H1 (cell line): ENCODE measurements at regions of chr10 and their contacts with region 1.

Region 1: GRCh38 chr10:69515699-69516259 is 57.4 kb downstream of the NEUROG3 start:
- DNase-seq: peak; percentile 63 to 90
- H3K4me3 ChIP-seq: no peak overlapping the region
- H3K27ac ChIP-seq: no peak overlapping the region
- H3K4me1 ChIP-seq: peaks cover 0 to 2% (median 0%) of the 10 kb centered on the region in 4 experiments; a peak in 2 of 7 replicates
- H3K27me3 ChIP-seq: no peaks in the 10 kb centered on the region
- CTCF ChIP-seq: peak; percentile 96 to 98 (median 97)
- EP300 ChIP-seq: no peak
- POLR2A ChIP-seq: no peak
- RAD21 ChIP-seq: peak; percentile 98 to 99

Region 2: GRCh38 chr10:69318867-69319727 is 196.7 kb before region 1 on chr10:
- CTCF ChIA-PET with region 1: no interaction called
- POLR2A ChIA-PET with region 1: no interaction called
- DNase-seq: no peak
- H3K4me3 ChIP-seq: peak overlapping the region; percentile 78 to 98 (median 91)
- H3K27ac ChIP-seq: peak overlapping the region; percentile 29; the same call in 1 of the 2 replicates
- H3K4me1 ChIP-seq: peaks cover 16 to 38% (median 24%) of the 10 kb centered on the region in 4 experiments
- H3K27me3 ChIP-seq: no peaks in the 10 kb centered on the region
- CTCF ChIP-seq: no peak
- EP300 ChIP-seq: no peak
- POLR2A ChIP-seq: no peak
- RAD21 ChIP-seq: no peak

Region 3: GRCh38 chr10:69494626-69495558 is 20.9 kb before region 1 on chr10:
- CTCF ChIA-PET with region 1: interaction called, 15 read pairs
- POLR2A ChIA-PET with region 1: interaction called, 4 read pairs
- DNase-seq: no peak
- H3K4me3 ChIP-seq: no peak overlapping the region
- H3K27ac ChIP-seq: no peak overlapping the region; the same call in 1 of the 2 replicates
- H3K4me1 ChIP-seq: peaks cover 0 to 7% (median 1%) of the 10 kb centered on the region in 4 experiments; a peak in 1 of 7 replicates
- H3K27me3 ChIP-seq: no peaks in the 10 kb centered on the region
- CTCF ChIP-seq: no peak
- EP300 ChIP-seq: no peak
- POLR2A ChIP-seq: no peak
- RAD21 ChIP-seq: no peak

Region 4: GRCh38 chr10:69549959-69550358 is 34.2 kb after region 1 on chr10:
- CTCF ChIA-PET with region 1: interaction called, 31 read pairs
- POLR2A ChIA-PET with region 1: no interaction called
- DNase-seq: no peak
- H3K4me3 ChIP-seq: no peak overlapping the region
- H3K27ac ChIP-seq: no peak overlapping the region
- H3K4me1 ChIP-seq: peaks cover 0 to 3% (median 0%) of the 10 kb centered on the region in 4 experiments; a peak in 1 of 7 replicates
- H3K27me3 ChIP-seq: no peaks in the 10 kb centered on the region
- CTCF ChIP-seq: no peak
- EP300 ChIP-seq: no peak
- POLR2A ChIP-seq: no peak
- RAD21 ChIP-seq: no peak

Region 5: GRCh38 chr10:69573056-69573806 is 57.5 kb after region 1 on chr10 and contains the start of gene NEUROG3:
- CTCF ChIA-PET with region 1: interaction called, 76 read pairs
- POLR2A ChIA-PET with region 1: interaction called, 6 read pairs
- DNase-seq: peak in 1 of 2 experiments; percentile 79
- H3K4me3 ChIP-seq: peak within 1 kb of the TSS; percentile 40 to 61 (median 46)
- H3K27ac ChIP-seq: no peak within 1 kb of the TSS
- H3K4me1 ChIP-seq: peaks cover 24 to 80% (median 52%) of the 10 kb centered on the region in 4 experiments
- H3K27me3 ChIP-seq: peaks cover 75 to 98% (median 98%) of the 10 kb centered on the region in 4 experiments
- CTCF ChIP-seq: no peak
- EP300 ChIP-seq: 0 out of 3 replicates have a peak, but pooled peaks of 1 of the 2 experiments have one; percentile 41
- POLR2A ChIP-seq: no peak
- RAD21 ChIP-seq: no peak; a peak in 1 of 4 replicates
- total RNA-seq, gene NEUROG3: 0.31 TPM in 1 of 2 replicates, not detected in the other

Region 6: DNA sequence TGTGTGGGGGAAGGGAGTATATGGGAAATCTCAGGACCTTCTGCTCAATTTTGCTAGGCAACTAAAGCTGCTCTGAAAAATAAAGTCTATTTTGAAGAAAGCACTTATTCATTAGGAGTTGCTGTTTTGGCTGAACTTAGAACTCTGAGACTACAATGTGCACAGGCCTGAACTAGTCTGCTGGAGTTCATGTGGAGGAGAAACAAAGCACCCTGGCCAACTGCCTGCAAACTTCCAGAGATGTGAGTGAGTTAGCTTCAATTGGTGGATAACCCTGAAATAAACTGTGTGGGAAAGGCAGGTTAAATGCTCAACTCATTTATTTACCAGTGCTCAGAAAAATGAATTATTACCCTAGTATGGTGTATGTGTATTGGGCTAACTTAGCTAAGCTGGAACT is 97.0 kb after region 1 on chr10:
- CTCF ChIA-PET with region 1: interaction called, 10 read pairs
- POLR2A ChIA-PET with region 1: no interaction called
- DNase-seq: no peak
- H3K4me3 ChIP-seq: no peak overlapping the region
- H3K27ac ChIP-seq: no peak overlapping the region
- H3K4me1 ChIP-seq: no peaks in the 10 kb centered on the region
- H3K27me3 ChIP-seq: no peaks in the 10 kb centered on the region
- CTCF ChIP-seq: no peak
- EP300 ChIP-seq: no peak
- POLR2A ChIP-seq: no peak
- RAD21 ChIP-seq: no peak

Region 7: GRCh38 chr10:69684020-69684980 is 168.5 kb after region 1 on chr10:
- CTCF ChIA-PET with region 1: interaction called, 12 read pairs
- POLR2A ChIA-PET with region 1: no interaction called
- DNase-seq: no peak
- H3K4me3 ChIP-seq: no peak overlapping the region
- H3K27ac ChIP-seq: no peak overlapping the region
- H3K4me1 ChIP-seq: peaks cover 0 to 6% (median 3%) of the 10 kb centered on the region in 4 experiments; a peak in 4 of 7 replicates
- H3K27me3 ChIP-seq: no peaks in the 10 kb centered on the region
- CTCF ChIP-seq: no peak
- EP300 ChIP-seq: no peak
- POLR2A ChIP-seq: no peak
- RAD21 ChIP-seq: no peak

Region 8: GRCh38 chr10:69845574-69846292 is 330.0 kb after region 1 on chr10:
- CTCF ChIA-PET with region 1: no interaction called
- POLR2A ChIA-PET with region 1: no interaction called
- DNase-seq: no peak
- H3K4me3 ChIP-seq: 0 out of 8 replicates have a peak overlapping the region, but pooled peaks of 1 of the 4 experiments have one; percentile 2
- H3K27ac ChIP-seq: no peak overlapping the region
- H3K4me1 ChIP-seq: peaks cover 11 to 43% (median 25%) of the 10 kb centered on the region in 4 experiments
- H3K27me3 ChIP-seq: no peaks in the 10 kb centered on the region
- CTCF ChIP-seq: no peak
- EP300 ChIP-seq: no peak
- POLR2A ChIP-seq: no peak
- RAD21 ChIP-seq: no peak